Activated CD4-positive, alpha-beta T cell treated with anti-CD3 and anti-CD28 coated beads for 36 hours (primary cell): ENCODE measurements at regions of chr9 and their contacts with region 1.

Region 1: DNA sequence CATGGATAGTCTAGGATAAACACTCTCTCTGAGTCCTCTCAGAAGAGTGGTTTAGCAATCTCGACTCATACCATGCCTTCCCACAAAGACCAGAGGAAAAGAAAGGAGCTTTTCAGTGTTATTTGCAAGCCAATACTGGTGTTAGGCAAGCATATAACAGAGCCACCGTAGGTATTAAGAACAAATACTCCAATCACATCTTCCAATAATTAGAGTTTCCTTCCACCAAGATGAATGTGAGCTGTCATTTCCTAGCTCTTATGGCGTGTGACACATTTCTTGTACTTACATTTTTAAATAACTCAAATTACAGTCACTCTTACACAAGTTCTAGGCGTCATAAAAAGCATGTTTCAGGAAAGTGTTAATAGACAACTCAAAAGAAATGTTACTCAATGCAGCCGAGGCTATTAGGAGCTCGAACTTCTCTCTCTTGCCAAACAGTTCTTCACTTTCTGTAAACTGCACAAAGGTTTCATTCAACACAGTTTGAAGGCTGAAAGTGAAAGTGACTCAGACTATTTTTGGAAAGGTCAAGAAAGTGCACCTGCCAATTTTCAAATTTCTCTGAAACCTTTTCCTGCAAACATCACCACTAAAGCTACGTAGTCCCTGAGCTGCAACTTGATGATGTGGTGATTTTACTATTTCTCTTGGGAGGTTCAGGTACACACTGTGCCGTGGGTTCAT is 153.8 kb downstream of the AUH start:
- DNase-seq: peak; percentile 51
- ATAC-seq: peak; percentile 80
- H3K4me3 Mint-ChIP-seq: peak overlapping the region; percentile 36
- H3K27ac Mint-ChIP-seq: peak overlapping the region; percentile 98
- H3K4me1 Mint-ChIP-seq: peaks cover 75% of the 10 kb centered on the region
- H3K27me3 Mint-ChIP-seq: no peaks in the 10 kb centered on the region

Region 2: DNA sequence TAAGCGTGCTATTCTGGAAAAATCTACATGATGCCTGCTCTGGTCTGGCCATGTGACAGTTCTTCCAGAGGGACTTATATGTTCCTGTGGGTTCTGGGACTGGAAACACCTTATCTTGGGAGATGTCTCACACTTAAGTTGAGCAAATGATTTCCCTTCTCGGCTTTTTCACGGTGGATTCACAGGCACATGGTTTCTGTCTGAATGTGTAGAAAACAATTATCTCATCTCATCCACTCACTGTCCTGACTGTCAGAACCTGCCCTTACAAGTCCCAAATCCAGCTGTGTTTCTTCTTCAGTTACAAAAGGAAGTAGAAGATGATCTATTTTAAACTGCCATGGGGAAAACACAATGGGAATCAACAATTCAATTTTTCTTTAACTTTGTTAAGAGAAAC is 222.2 kb before region 1 on chr9:
- CTCF ChIA-PET with region 1: no interaction called
- POLR2A ChIA-PET with region 1: no interaction called
- intact Hi-C with region 1: no loop called
- DNase-seq: no peak
- ATAC-seq: no peak
- H3K4me3 Mint-ChIP-seq: no peak overlapping the region
- H3K27ac Mint-ChIP-seq: no peak overlapping the region
- H3K4me1 Mint-ChIP-seq: peaks cover 5% of the 10 kb centered on the region
- H3K27me3 Mint-ChIP-seq: peaks cover 8% of the 10 kb centered on the region

Region 3: GRCh38 chr9:91071185-91071990 is 136.5 kb before region 1 on chr9:
- CTCF ChIA-PET with region 1: interaction called, 3 read pairs
- POLR2A ChIA-PET with region 1: interaction called, 7 read pairs
- intact Hi-C with region 1: loop called (anchors 1 kb)
- DNase-seq: peak; percentile 88
- ATAC-seq: peak; percentile 97
- H3K4me3 Mint-ChIP-seq: peak overlapping the region; percentile 37
- H3K27ac Mint-ChIP-seq: peak overlapping the region; percentile 97
- H3K4me1 Mint-ChIP-seq: peaks cover 24% of the 10 kb centered on the region
- H3K27me3 Mint-ChIP-seq: peaks cover 7% of the 10 kb centered on the region

Region 4: GRCh38 chr9:91131433-91131839 is 76.4 kb before region 1 on chr9:
- CTCF ChIA-PET with region 1: no interaction called
- POLR2A ChIA-PET with region 1: interaction called, 22 read pairs
- intact Hi-C with region 1: loop called (anchors 1 kb)
- DNase-seq: peak; percentile 91
- ATAC-seq: peak; percentile 98
- H3K4me3 Mint-ChIP-seq: peak overlapping the region; percentile 3
- H3K27ac Mint-ChIP-seq: peak overlapping the region; percentile 94
- H3K4me1 Mint-ChIP-seq: peaks cover 29% of the 10 kb centered on the region
- H3K27me3 Mint-ChIP-seq: no peaks in the 10 kb centered on the region

Region 5: GRCh38 chr9:91223000-91223399 is 15.1 kb after region 1 on chr9:
- CTCF ChIA-PET with region 1: interaction called, 7 read pairs
- POLR2A ChIA-PET with region 1: interaction called, 4 read pairs
- intact Hi-C with region 1: loop called in 1 of 2 experiments (anchors 2 kb)
- DNase-seq: peak; percentile 59
- ATAC-seq: peak; percentile 81
- H3K4me3 Mint-ChIP-seq: no peak overlapping the region
- H3K27ac Mint-ChIP-seq: no peak overlapping the region
- H3K4me1 Mint-ChIP-seq: peaks cover 39% of the 10 kb centered on the region
- H3K27me3 Mint-ChIP-seq: no peaks in the 10 kb centered on the region

Region 6: DNA sequence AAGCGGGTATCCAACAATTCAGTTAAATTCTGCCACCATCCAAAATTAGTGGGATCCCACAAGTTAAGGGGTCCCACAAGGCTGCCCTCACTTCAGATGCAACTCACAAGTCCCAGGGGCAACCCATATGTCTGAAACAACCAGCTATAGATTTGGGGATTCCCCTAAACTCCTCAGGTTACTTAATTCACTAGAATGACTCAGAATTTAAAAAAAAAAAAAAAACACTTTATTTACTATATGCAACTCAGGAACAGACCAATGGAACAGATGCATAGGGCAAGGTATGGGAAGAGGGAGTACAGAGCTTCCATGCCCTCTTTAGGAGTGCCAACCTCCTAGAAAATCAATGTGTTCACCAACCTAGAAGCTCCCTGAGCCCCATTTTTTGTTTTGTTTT is 138.8 kb after region 1 on chr9:
- CTCF ChIA-PET with region 1: no interaction called
- POLR2A ChIA-PET with region 1: interaction called, 9 read pairs
- intact Hi-C with region 1: loop called in 1 of 2 experiments (anchors 5 kb)
- DNase-seq: no peak
- ATAC-seq: peak; percentile 65
- H3K4me3 Mint-ChIP-seq: no peak overlapping the region
- H3K27ac Mint-ChIP-seq: peak overlapping the region; percentile 3
- H3K4me1 Mint-ChIP-seq: peaks cover 56% of the 10 kb centered on the region
- H3K27me3 Mint-ChIP-seq: no peaks in the 10 kb centered on the region

Region 7: DNA sequence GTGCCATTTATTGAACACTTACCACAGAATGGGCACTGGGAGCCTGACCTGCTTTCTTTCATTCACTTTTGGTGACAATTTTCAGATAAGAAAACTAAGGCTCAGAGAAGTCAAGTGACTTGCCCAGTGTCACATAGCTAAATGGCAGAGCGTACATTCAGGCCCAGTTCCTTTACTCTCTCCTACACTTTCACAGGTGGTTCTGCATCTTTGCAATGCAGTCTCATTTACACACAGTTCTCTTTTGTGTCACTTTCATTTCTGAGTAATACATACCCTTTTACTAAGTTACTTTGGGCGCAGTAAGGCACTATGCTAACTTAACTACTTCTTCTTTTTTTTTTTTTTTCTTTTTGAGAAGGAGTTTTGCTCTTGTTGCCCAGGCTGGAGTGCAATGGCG is 207.4 kb after region 1 on chr9:
- CTCF ChIA-PET with region 1: interaction called, 4 read pairs
- POLR2A ChIA-PET with region 1: interaction called, 5 read pairs
- intact Hi-C with region 1: loop called (anchors 1 kb)
- DNase-seq: peak; percentile 49
- ATAC-seq: peak; percentile 78
- H3K4me3 Mint-ChIP-seq: peak overlapping the region; percentile 41
- H3K27ac Mint-ChIP-seq: peak overlapping the region; percentile 96
- H3K4me1 Mint-ChIP-seq: peaks cover 85% of the 10 kb centered on the region
- H3K27me3 Mint-ChIP-seq: no peaks in the 10 kb centered on the region